ENCODE measurements at regions of chr1 and their contacts with region 1.

Region 1: GRCh38 chr1:218377143-218377660 is 32.1 kb downstream of the TGFB2 start:
- DNase-seq: peak; percentile 59
- H3K4me3 Mint-ChIP-seq: no peak overlapping the region
- H3K27ac Mint-ChIP-seq: peak overlapping the region; percentile 63
- H3K4me1 Mint-ChIP-seq: peaks cover 21% of the 10 kb centered on the region
- H3K27me3 Mint-ChIP-seq: peaks cover 55% of the 10 kb centered on the region

Region 2: GRCh38 chr1:218284934-218285635 is 92.1 kb before region 1 on chr1 and contains the start of gene RRP15:
- intact Hi-C with region 1: loop called (anchors 1 kb)
- DNase-seq: peak; percentile 81
- H3K4me3 Mint-ChIP-seq: peak within 1 kb of the TSS; percentile 98
- H3K27ac Mint-ChIP-seq: peak within 1 kb of the TSS; percentile 94
- H3K4me1 Mint-ChIP-seq: peaks cover 18% of the 10 kb centered on the region
- H3K27me3 Mint-ChIP-seq: peaks cover 3% of the 10 kb centered on the region
- total RNA-seq, gene RRP15: 32.9 and 34.6 TPM in 2 replicates

Region 3: GRCh38 chr1:218330043-218330623 is 47.1 kb before region 1 on chr1:
- intact Hi-C with region 1: no loop called
- DNase-seq: no peak
- H3K4me3 Mint-ChIP-seq: no peak overlapping the region
- H3K27ac Mint-ChIP-seq: no peak overlapping the region
- H3K4me1 Mint-ChIP-seq: no peaks in the 10 kb centered on the region
- H3K27me3 Mint-ChIP-seq: no peaks in the 10 kb centered on the region

Region 4: DNA sequence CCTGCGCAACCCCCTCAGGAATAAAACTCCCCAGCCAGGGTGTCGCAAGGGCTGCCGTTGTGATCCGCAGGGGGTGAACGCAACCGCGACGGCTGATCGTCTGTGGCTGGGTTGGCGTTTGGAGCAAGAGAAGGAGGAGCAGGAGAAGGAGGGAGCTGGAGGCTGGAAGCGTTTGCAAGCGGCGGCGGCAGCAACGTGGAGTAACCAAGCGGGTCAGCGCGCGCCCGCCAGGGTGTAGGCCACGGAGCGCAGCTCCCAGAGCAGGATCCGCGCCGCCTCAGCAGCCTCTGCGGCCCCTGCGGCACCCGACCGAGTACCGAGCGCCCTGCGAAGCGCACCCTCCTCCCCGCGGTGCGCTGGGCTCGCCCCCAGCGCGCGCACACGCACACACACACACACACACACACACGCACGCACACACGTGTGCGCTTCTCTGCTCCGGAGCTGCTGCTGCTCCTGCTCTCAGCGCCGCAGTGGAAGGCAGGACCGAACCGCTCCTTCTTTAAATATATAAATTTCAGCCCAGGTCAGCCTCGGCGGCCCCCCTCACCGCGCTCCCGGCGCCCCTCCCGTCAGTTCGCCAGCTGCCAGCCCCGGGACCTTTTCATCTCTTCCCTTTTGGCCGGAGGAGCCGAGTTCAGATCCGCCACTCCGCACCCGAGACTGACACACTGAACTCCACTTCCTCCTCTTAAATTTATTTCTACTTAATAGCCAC is 31.4 kb before region 1 on chr1:
- intact Hi-C with region 1: loop called (anchors 1 kb)
- DNase-seq: no peak
- H3K4me3 Mint-ChIP-seq: peak overlapping the region; percentile 67
- H3K27ac Mint-ChIP-seq: no peak overlapping the region
- H3K4me1 Mint-ChIP-seq: peaks cover 16% of the 10 kb centered on the region
- H3K27me3 Mint-ChIP-seq: peaks cover 63% of the 10 kb centered on the region

Region 5: GRCh38 chr1:218351391-218352074 is 25.7 kb before region 1 on chr1:
- intact Hi-C with region 1: loop called (anchors 1 kb)
- DNase-seq: no peak
- H3K4me3 Mint-ChIP-seq: no peak overlapping the region
- H3K27ac Mint-ChIP-seq: no peak overlapping the region
- H3K4me1 Mint-ChIP-seq: peaks cover 19% of the 10 kb centered on the region
- H3K27me3 Mint-ChIP-seq: peaks cover 66% of the 10 kb centered on the region

Region 6: DNA sequence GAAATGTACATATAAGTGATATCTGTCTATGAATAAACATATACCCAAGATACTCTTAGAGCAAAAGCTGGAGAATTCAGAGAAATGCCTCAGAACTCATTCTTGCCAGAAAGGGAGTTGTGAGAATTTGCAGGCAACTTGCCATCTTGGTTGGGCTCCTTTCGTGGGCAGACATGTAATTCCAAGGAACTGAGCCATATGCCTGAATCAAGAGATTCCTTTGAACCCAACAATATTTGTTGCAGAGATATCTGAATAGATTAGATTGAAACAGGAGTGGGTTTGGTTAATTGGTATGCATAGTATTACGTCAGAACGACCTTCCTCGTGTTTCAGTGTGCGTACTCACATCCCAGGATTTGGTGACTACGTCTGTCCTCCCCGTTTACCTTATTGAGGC is 35.0 kb after region 1 on chr1:
- intact Hi-C with region 1: no loop called
- DNase-seq: no peak
- H3K4me3 Mint-ChIP-seq: no peak overlapping the region
- H3K27ac Mint-ChIP-seq: no peak overlapping the region
- H3K4me1 Mint-ChIP-seq: no peaks in the 10 kb centered on the region
- H3K27me3 Mint-ChIP-seq: peaks cover 2% of the 10 kb centered on the region

Region 7: GRCh38 chr1:219189021-219189824 is 812.0 kb after region 1 on chr1:
- intact Hi-C with region 1: loop called (anchors 2 kb)
- DNase-seq: no peak
- H3K4me3 Mint-ChIP-seq: no peak overlapping the region
- H3K27ac Mint-ChIP-seq: no peak overlapping the region
- H3K4me1 Mint-ChIP-seq: peaks cover 21% of the 10 kb centered on the region
- H3K27me3 Mint-ChIP-seq: no peaks in the 10 kb centered on the region

Measured in activated T-helper 2 cell treated with anti-CD3 and anti-CD28 coated beads, Interferon-gamma antibody, Interleukin-2, Interleukin-4, amounts not matched to agents 10 μg/mL and 5 μg/mL and 100 μg/mL, durations not matched to agents 14 hours and 24 hours and 36 hours (primary cell).